MCF 10A (cell line): ENCODE measurements at regions of chr17 and their contacts with region 1.

Region 1: GRCh38 chr17:40287494-40288369 is at the start of gene CDC6:
- DNase-seq: peak; percentile 100
- H3K4me3 Mint-ChIP-seq: peak within 1 kb of the TSS; percentile 99
- H3K27ac Mint-ChIP-seq: peak within 1 kb of the TSS; percentile 69
- H3K4me1 Mint-ChIP-seq: peaks cover 24% of the 10 kb centered on the region
- H3K27me3 Mint-ChIP-seq: no peaks in the 10 kb centered on the region
- CTCF ChIP-seq: no peak
- total RNA-seq, gene CDC6: 70.0 and 96.8 TPM in 2 replicates

Region 2: DNA sequence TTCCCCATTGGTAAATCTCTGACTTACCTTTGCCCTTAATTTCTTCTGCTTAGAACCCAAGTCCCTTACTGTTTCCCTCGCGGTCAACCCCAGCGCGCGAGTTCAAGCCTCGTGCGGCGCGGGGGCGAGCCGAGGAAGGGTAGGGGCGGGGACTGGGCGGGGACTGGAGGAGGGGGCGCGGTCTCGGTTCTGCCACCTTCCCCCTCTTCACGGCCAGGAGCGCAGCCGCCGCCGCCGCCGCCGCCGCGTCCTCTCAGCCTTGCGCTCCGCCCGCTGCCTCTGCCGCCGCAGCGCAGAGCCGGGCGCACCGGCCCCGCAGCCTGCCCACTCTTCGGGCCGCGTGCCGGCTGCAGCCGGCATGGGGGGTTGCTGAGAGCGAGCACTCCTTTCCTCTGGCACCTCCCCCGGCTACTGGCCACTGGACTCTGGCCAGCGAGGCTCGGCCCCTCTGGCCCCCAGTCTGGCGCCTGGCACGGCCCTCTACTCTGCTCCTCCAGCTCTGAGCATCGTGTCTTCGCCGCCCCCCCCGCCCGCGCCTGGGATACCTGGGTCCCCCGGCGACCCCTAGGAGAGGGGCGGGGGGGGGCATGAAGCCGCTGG is 110.4 kb before region 1 on chr17 and contains the start of gene RAPGEFL1:
- CTCF ChIA-PET with region 1: interaction called, 3 read pairs
- POLR2A ChIA-PET with region 1: interaction called, 10 read pairs
- intact Hi-C with region 1: no loop called
- DNase-seq: peak; percentile 69
- H3K4me3 Mint-ChIP-seq: peak within 1 kb of the TSS; percentile 59
- H3K27ac Mint-ChIP-seq: peak within 1 kb of the TSS; percentile 92
- H3K4me1 Mint-ChIP-seq: peaks cover 29% of the 10 kb centered on the region
- H3K27me3 Mint-ChIP-seq: no peaks in the 10 kb centered on the region
- CTCF ChIP-seq: no peak
- total RNA-seq, gene RAPGEFL1: 4.9 and 5.6 TPM in 2 replicates

Region 3: DNA sequence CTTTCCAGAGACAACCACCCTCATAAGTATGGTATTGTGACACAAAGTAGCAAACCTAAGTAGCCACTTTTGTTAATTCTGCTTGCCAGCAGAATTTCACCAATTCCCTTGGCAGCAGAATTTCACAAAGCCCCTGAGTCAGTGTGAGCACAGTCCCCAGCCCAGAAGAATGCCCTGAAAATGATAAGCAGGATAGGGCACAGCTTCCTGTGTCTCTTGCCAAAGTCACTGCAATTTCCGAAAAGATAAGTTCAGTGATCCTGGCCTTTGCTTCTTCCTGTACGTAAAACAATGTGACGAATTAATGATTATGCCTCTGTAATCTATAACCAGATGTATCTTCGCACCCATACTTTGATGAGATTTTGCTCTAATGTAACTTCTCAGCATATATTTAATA is 84.6 kb before region 1 on chr17:
- CTCF ChIA-PET with region 1: interaction called, 131 read pairs
- POLR2A ChIA-PET with region 1: interaction called, 12 read pairs
- intact Hi-C with region 1: loop called (anchors 1 kb)
- DNase-seq: no peak
- H3K4me3 Mint-ChIP-seq: no peak overlapping the region
- H3K27ac Mint-ChIP-seq: no peak overlapping the region
- H3K4me1 Mint-ChIP-seq: peaks cover 5% of the 10 kb centered on the region
- H3K27me3 Mint-ChIP-seq: no peaks in the 10 kb centered on the region
- CTCF ChIP-seq: no peak

Region 4: DNA sequence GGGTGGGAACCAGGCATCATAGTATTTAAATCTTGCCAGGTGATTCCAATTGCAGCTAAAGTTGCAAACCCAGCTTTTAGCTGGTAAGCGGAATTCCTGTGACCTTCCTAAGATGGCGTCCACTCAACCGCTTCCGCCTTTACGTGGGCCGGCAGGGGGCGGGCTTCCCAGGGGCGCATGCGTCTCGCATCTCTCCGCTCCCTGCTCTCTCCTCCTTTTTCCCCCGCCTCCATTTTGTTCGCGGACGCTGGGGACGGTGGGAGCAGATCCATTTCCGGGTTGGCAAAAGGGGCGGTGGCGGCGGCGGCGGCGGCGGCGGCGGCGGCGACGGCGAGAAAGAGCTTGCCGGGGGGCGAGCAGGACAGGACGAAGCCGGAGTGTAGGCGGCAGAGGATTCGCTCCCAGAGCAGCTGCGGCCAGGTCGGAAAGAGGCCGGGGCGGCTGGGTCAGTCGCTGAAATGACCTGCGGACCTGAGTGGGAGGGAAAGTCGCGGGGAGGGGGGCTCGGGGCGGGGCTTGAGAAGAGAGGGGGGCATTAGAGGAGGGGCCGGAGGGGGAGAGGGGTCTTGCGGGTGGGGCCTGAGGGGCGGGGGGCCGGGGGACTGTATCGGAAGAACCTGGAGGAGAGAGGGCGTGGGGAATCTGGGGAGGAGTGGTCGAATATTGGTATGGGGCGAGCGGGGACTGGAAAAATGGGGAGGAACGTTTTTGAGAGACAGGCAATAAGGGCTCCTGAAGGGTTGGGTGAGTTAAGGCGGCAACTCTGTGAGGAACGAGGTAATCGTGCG is 68.5 kb before region 1 on chr17 and contains the start of gene WIPF2:
- CTCF ChIA-PET with region 1: interaction called, 13 read pairs
- POLR2A ChIA-PET with region 1: interaction called, 35 read pairs
- intact Hi-C with region 1: loop called (anchors 2 kb)
- DNase-seq: peak; percentile 97
- H3K4me3 Mint-ChIP-seq: peak within 1 kb of the TSS; percentile 90
- H3K27ac Mint-ChIP-seq: peak within 1 kb of the TSS; percentile 98
- H3K4me1 Mint-ChIP-seq: peaks cover 16% of the 10 kb centered on the region
- H3K27me3 Mint-ChIP-seq: no peaks in the 10 kb centered on the region
- CTCF ChIP-seq: peak; percentile 68
- total RNA-seq, gene WIPF2: 31.9 and 32.8 TPM in 2 replicates

Region 5: DNA sequence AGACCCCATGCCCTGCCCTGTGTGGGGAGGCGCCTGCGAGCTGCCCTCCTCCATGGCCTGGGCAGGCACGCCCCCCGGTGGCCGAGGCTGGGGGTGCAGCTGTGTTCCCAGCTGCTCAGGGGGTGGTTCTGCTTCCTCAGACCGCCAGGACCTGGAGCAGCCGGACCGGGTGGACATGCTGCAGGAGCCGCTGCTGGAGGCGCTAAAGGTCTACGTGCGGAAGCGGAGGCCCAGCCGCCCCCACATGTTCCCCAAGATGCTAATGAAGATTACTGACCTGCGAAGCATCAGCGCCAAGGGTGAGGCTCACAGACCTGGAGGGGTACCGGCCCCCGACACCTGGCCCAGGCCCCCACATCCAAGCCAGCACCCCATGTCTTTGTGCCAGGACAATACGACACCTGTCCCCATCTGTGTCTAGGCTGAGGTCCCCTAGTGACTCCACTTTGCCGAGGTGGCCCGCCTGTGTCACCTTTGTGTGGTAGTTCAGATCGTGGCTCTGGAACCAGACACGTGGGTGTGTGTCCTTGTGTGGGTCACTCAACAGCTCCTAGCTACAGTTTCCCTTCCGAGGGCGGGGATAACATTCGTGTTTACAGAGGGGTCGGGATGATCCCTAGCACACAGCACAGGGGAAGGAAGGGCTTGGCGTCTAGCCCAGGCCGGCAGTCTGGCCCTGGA is 67.5 kb after region 1 on chr17:
- CTCF ChIA-PET with region 1: interaction called, 12 read pairs
- POLR2A ChIA-PET with region 1: interaction called, 3 read pairs
- intact Hi-C with region 1: no loop called
- DNase-seq: peak; percentile 56
- H3K4me3 Mint-ChIP-seq: no peak overlapping the region
- H3K27ac Mint-ChIP-seq: no peak overlapping the region
- H3K4me1 Mint-ChIP-seq: peaks cover 7% of the 10 kb centered on the region
- H3K27me3 Mint-ChIP-seq: no peaks in the 10 kb centered on the region
- CTCF ChIP-seq: peak; percentile 94